HEK293 (cell line): ENCODE measurements at regions of chr19 and their contacts with region 1.

Region 1: DNA sequence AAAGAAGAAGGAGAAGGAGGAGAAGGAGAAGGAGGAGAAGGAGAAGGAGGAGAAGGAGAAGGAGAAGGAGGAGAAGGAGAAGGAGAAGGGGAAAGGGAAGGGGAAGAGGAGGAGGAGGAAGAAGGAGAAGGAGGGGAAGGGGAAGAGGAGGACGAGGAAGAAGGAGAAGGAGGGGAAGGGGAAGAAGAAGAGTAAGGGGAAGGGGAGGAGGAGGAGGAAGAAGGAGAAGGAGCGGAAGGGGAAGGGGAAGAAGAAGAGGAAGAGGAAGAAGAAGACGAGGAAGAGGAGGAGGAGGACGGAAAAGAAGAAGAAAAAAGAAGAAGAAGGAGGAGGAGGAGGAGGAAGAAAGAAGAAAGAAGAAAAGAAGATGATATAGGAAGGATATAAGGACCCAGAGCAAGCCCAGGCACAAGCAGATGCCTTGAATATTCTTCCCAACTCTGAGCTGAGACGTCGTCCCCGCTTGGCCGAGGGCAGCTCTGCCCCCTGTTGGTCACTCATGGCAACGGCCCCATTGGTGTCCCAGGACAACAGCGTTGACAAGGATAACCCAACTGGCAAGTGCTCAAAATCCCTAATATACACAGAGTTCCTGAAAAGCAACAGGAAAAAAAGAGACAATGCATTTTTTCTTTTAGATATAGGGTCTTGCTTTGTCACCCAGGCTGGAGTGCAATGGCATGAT is 30.6 kb upstream of the IGSF23 start:
- H3K4me3 ChIP-seq: no peak overlapping the region
- H3K27ac ChIP-seq: no peak overlapping the region
- H3K4me1 ChIP-seq: no peaks in the 10 kb centered on the region
- CTCF ChIP-seq: peak; percentile 53; the same call in 1 of the 2 replicates

Region 2: DNA sequence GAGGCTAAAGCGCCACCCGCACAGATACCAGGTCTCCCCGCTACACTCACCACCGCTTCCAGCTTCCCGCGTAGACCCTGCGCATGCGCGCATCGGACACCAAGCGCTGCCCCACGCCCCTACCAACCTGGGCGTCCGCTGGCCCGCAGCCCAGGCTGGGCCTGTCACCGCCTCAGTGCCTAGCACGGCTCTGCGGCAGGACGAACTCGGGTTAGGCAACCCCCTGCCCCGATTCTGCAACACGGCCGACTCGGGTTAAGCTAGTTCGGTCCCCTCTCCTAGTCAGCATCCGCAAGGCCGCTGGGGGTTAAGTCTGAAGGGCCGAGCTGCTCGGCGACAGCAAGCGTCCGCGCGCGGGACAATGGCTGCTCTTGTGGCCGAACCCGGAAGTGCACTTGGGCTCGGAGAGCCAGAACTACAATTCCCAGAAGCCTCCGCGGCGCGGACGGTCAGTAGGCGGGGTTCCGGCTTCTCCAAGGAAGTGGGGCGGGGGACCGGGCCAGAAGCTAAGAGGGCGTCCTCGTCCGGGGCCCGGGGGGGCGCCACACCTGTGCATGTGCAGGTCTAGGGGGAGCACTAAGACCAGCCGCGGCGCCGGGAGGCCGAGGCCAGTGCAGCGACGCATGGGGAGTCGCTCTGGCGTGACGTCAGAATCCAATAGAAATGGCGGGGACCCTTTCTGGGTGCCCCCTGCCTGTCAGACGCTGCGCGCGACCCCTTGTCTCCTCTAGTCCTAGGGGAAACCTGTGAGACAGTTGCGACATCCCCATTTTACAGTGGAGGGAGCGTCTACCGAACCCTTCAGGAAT is 82.4 kb before region 1 on chr19 and contains the start of gene ZNF180:
- CTCF ChIA-PET with region 1: no interaction called
- POLR2A ChIA-PET with region 1: no interaction called
- H3K4me3 ChIP-seq: peak within 1 kb of the TSS; percentile 78
- H3K27ac ChIP-seq: peak within 1 kb of the TSS; percentile 64
- H3K4me1 ChIP-seq: no peaks in the 10 kb centered on the region
- CTCF ChIP-seq: peak; percentile 97

Region 3: DNA sequence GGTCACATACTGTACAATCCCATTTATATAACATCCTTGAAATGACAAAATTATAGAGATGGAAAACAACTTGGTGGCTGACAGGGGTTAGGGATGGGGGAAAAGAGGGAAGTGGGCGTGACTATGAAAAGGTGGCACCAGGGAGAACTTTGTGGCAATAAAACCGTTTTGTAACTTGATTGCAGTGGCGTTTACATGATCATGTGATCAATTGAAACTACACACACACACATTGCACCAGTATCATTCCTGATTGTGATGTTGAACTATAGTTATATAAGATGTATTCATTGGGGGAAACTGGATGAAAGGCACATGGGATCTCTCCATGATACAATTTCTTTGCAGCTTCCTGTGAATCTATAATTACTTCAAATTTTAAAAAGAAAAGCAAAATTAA is 16.7 kb before region 1 on chr19:
- CTCF ChIA-PET with region 1: interaction called, 31 read pairs
- POLR2A ChIA-PET with region 1: no interaction called
- H3K4me3 ChIP-seq: no peak overlapping the region
- H3K27ac ChIP-seq: no peak overlapping the region
- H3K4me1 ChIP-seq: no peaks in the 10 kb centered on the region
- CTCF ChIP-seq: no peak

Region 4: DNA sequence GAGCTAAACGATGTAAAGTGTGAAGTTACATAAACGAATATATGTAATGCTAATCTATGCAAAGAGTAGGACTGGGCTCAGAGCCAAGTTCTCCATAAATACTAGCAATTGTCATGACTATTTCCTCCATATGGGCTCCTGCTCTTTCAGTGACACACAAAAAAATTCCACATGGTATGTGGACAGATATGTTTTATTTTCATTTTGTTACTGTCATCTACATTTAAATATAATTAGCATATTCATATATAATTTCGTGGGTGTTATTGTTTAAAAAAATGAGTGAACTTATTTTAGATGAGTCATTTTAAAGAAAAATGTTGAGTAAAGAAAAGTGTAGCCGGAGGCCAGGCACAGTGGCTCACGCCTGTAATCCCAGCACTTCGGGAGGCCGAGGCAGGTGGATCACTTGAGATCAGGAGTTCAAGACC is 25.7 kb after region 1 on chr19:
- CTCF ChIA-PET with region 1: interaction called, 19 read pairs
- POLR2A ChIA-PET with region 1: no interaction called
- H3K4me3 ChIP-seq: no peak overlapping the region
- H3K27ac ChIP-seq: no peak overlapping the region
- H3K4me1 ChIP-seq: no peaks in the 10 kb centered on the region; the same call in 1 of the 2 replicates
- CTCF ChIP-seq: no peak

Region 5: DNA sequence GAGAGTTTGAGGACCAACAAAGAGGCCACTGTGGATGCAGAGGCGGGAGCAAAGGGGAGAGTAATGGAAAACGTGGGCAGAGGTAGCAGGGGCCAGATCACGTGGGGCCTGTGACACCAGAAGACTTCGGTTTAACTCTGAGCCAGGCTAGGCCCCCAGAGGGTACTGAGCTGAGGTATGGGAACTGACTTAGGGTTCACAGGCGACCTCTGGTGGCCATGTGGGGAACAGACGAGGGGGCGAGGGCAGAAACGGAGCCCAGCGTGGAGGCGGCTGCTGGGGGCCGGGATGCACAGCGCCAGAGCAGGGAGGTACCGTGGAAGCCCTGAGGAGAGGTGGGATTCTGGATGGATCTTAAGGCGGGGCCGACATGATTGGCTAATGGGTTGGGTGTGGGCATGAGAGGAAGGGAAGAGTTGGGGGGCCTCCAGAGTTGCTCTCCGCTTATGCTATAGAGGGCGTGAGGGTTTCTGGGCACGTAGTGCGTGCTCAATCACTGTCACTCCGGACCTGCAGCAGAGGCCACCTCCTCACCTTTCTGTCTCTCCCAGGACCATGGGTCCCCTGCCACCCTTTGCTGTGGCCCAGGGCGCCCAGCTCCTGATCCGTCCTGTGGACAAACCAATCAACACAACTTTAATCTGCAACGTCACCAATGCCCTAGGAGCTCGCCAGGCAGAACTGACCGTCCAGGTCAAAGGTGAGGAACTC is 74.6 kb after region 1 on chr19:
- CTCF ChIA-PET with region 1: interaction called, 44 read pairs
- POLR2A ChIA-PET with region 1: interaction called, 3 read pairs
- H3K4me3 ChIP-seq: no peak overlapping the region
- H3K27ac ChIP-seq: no peak overlapping the region
- H3K4me1 ChIP-seq: no peaks in the 10 kb centered on the region
- CTCF ChIP-seq: peak; percentile 92